HEK293 (cell line): ENCODE measurements at regions of chr9 and their contacts with region 1.

Region 1: DNA sequence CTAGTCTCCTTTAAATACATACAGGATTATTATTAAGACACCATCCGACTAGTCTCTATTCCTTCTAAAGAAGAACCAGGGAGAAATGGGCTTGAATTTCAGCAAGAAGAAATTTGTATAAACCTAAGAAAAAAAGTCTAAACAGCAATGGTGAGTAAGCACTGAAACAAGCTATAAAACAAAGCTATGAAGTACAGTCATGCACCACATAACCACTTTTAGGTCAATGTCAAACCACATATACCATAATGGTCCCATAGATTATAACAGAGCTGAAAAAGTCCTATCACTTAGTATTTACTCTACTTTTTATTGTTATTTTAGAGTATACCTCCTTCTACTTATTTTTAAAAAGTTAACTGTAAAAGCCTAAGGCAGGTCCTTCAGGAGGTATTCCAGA is 102.0 kb upstream of the NFIB start:
- H3K4me3 ChIP-seq: no peak overlapping the region
- H3K27ac ChIP-seq: no peak overlapping the region
- H3K4me1 ChIP-seq: peaks cover 12% of the 10 kb centered on the region; the same call in 1 of the 2 replicates
- CTCF ChIP-seq: no peak

Region 2: DNA sequence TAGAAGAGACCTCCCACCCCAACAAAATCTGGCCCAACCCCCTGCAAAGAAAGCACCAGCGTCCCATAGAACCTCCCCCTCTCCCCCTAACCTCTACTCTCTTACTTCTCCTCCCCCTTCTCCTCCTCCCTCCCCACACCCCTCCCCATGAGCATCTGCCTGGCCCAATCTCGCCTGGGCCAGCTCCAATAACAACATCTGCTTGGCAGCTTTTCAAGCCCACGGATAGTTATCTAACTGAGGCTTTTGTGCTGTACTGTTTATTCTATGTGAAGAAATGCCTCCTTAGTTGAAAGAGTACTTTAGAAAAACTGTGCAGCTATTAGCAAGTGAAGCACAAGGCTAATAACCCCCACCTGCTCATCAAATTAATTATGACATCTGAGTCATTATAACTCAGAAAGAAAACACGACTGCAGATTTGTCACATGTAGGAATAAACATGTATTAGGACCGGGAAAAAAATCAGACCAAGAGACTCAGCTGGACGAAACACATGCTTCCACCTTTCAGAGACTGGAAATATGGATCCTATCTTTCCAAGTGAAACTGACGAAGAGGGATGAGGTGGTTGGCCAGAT is 144.8 kb before region 1 on chr9:
- CTCF ChIA-PET with region 1: no interaction called
- POLR2A ChIA-PET with region 1: no interaction called
- H3K4me3 ChIP-seq: no peak overlapping the region
- H3K27ac ChIP-seq: peak overlapping the region; percentile 48
- H3K4me1 ChIP-seq: peaks cover 44% of the 10 kb centered on the region
- CTCF ChIP-seq: no peak

Region 3: GRCh38 chr9:14353222-14354056 is 62.5 kb before region 1 on chr9:
- CTCF ChIA-PET with region 1: no interaction called
- POLR2A ChIA-PET with region 1: no interaction called
- H3K4me3 ChIP-seq: no peak overlapping the region
- H3K27ac ChIP-seq: peak overlapping the region; percentile 28; the same call in 1 of the 2 replicates
- H3K4me1 ChIP-seq: peaks cover 3% of the 10 kb centered on the region; the same call in 1 of the 2 replicates
- CTCF ChIP-seq: peak; percentile 81

Region 4: DNA sequence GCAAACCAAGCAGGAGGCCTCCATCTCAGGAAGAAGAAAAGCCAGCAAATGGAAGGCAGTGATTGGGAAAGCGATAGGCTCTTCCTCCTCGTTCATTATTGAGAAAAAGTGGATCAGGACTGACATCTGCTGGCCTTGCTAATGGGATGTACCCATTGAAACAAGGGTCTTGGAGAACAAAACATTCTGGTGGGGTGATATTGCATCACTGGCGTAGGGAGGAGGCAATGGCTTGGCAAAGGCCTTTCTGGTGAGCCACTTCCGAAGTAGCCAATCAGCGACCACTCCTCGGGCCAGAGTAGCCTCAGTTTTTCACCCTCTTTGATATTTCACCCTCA is 15.3 kb before region 1 on chr9:
- CTCF ChIA-PET with region 1: interaction called, 15 read pairs
- POLR2A ChIA-PET with region 1: no interaction called
- H3K4me3 ChIP-seq: no peak overlapping the region
- H3K27ac ChIP-seq: no peak overlapping the region
- H3K4me1 ChIP-seq: no peaks in the 10 kb centered on the region
- CTCF ChIP-seq: peak; percentile 48; the same call in 1 of the 2 replicates

Region 5: DNA sequence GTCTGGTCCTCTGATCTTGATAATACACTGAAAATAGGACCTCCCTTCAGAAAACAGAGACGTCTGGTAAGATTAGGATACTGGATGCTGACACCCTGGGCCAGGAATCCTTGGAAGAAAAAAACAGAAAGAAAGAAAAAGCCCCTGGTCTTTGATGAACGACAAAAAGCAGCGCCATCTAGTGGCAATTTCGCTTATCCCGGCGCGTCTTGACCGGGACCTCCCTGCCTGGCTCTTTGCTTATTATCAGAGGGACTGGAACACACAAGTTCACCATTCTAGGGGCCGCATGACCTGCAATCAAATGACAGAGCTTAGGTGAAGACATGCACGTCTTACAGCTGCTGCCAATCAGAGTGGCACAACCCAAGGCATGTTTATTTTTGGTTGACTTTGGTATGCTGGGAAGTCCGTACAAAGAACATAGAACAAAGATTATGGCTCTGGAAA is 12.9 kb after region 1 on chr9:
- CTCF ChIA-PET with region 1: interaction called, 10 read pairs
- POLR2A ChIA-PET with region 1: no interaction called
- H3K4me3 ChIP-seq: no peak overlapping the region
- H3K27ac ChIP-seq: no peak overlapping the region
- H3K4me1 ChIP-seq: no peaks in the 10 kb centered on the region
- CTCF ChIP-seq: 0 out of 2 replicates have a peak, but pooled peaks have one; percentile 17